Stomach (tissue), 19 donors: ENCODE measurements at regions of chr11 and their contacts with region 1.

Region 1: GRCh38 chr11:62694455-62695167 is 5.3 kb upstream of the LRRN4CL start:
- DNase-seq: peak; percentile 85 to 92
- H3K4me3 ChIP-seq: no peak overlapping the region
- H3K27ac ChIP-seq: no peak overlapping the region
- H3K4me1 ChIP-seq: peaks cover 0 to 9% (median 4%) of the 10 kb centered on the region in 4 donors
- H3K27me3 ChIP-seq: no peaks in the 10 kb centered on the region
- CTCF ChIP-seq: peak in 5 of 7 experiments; percentile 51 to 79 (median 71)
- EP300 ChIP-seq: no peak
- POLR2A ChIP-seq: no peak

Region 2: DNA sequence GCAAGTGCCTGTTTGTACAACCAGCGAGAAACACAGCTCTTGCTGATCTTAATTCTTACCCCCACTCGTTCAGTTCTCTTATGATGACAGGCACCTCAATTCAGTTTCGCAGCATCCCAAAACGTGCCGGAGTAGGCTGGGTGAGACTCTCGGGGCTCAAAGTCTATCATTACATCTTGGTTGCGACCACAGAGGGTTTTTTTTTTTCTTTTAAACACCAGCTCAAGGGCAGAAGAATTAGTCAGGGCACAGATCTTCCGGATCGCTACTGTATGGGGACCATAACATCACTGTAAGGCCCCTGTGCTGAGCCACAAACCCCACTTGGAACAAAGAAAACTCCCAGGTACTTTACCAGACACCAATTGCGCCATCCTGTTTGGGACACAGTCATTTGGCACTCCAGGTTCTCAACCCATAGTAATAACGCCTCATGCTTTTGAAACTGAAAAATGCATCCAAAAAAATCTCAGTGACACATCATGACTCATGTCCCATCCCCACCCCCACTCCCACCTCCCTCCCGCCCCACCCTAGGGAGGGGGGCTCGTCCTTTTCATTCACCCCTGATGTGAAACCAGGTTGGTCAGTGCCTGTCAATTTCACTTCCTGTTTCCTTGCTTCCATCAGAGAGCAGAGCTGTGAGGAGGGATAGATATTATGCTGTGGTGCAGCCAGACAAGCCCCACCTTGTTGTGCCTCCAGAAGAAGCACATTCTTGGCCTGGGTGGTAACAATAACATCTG is 1633.4 kb before region 1 on chr11:
- intact Hi-C with region 1: no loop called
- DNase-seq: peak in 1 of 2 donors; percentile 56
- H3K4me3 ChIP-seq: no peak overlapping the region
- H3K27ac ChIP-seq: peak overlapping the region in 1 of 5 donors; percentile 20
- H3K4me1 ChIP-seq: peaks cover 0 to 10% (median 0%) of the 10 kb centered on the region in 4 donors
- H3K27me3 ChIP-seq: no peaks in the 10 kb centered on the region
- CTCF ChIP-seq: no peak
- EP300 ChIP-seq: no peak
- POLR2A ChIP-seq: no peak

Region 3: DNA sequence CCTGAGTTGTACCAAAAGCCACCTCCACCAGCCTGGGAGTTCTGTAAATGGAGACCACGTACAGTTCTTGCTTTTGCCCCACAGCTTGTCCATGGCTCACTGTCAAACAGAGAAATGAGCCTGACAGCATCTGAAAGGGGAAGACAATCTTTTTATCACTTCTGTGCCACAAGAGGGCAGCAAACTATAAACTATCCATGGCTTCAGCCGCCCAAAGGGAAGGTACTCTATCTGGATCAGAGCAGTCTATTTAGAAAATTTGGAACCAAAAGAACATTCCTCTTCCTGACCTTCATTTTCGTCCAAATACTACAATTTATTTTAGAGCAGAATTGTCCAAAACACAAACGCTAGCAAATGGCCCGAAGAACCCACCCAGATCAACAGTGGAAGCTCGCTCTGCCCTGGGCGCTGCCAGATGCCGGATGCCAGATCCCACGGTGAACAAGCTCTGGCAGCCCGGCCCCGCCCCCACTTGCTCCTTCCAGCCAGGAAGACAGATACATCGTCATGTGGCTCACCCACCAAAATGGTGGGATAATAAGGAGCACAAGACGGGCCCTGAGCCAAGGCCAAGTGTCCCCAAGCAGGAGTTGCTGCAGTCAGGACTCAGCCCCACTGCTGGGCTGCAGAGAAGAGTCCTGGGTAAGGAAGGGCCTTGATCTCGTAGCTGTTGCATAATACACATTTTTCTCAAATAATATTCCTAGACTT is 299.6 kb before region 1 on chr11:
- intact Hi-C with region 1: loop called (anchors 10 kb)
- DNase-seq: peak; percentile 57 to 94
- H3K4me3 ChIP-seq: peak overlapping the region; percentile 23 to 33 (median 30)
- H3K27ac ChIP-seq: peak overlapping the region; percentile 36 to 81 (median 66)
- H3K4me1 ChIP-seq: peaks cover 27 to 54% (median 41%) of the 10 kb centered on the region in 4 donors
- H3K27me3 ChIP-seq: no peaks in the 10 kb centered on the region
- CTCF ChIP-seq: peak in 5 of 7 experiments; percentile 35 to 74 (median 62)
- EP300 ChIP-seq: no peak
- POLR2A ChIP-seq: no peak